Common myeloid progenitor, CD34-positive (primary cell): ENCODE measurements at regions of chr5 and their contacts with region 1.

Region 1: DNA sequence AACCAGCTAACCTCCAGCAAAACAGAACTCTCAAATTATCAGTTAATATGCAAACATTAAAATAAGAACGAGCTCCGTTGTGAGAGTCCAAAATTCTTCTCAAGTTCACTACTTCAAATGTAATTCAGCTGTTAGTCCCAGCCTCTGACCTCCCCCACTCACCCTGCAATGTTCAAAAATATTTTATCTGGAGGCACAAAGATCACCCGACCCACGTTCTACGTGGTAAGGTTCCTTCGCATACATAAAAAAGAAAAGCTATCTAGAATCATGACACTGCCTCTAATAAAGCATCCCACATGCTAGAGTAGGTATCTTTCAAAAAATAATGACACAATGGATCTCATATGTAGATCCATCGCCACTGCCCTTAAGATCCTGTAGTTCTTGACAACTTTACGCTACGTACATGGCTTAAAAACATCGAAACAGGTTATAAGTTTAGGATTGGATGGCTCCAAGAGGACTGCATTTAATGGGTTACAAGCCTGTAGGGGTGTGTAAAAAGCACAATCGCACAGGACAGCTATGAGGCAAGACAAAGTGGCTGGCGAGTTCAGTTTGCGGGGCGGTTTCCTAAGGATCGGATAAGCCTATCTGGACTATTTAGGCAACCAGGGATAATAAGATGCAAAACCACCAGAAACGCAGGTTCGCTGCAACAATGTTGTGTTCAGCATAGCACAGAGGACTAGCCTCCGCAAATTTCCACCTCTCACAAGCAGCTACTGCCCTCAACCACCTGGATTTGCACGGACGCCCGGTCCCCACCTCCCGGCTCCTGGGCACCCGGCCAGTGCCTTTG is 969 bp downstream of the CLK4 start:
- DNase-seq: peak in 1 of 3 donors; percentile 5
- H3K4me3 ChIP-seq: peak overlapping the region; percentile 81 to 99 (median 98)
- H3K27ac ChIP-seq: peak overlapping the region; percentile 93 to 96
- H3K4me1 ChIP-seq: peaks cover 12 to 19% (median 14%) of the 10 kb centered on the region in 4 experiments
- H3K27me3 ChIP-seq: no peaks in the 10 kb centered on the region

Region 2: DNA sequence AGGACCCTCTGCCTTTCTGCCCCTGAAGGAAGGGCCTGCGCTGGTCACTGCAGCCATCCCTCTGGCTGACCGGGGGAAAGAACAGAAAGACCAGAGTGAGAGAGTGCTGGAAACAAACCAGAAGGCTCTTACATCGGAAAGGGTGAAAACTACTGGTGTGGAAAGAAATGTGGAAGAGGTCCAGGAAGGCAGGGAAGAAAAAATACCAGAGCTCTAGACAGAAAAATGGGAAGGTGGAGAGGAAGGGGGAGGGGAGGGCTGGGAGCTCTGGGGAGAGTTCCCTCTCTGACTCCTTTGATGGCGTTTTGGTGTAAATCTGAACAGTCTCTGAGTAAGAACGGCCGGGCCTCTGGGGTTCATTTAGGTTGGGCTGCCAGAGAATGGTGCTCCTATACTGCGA is 83.4 kb before region 1 on chr5:
- CTCF ChIA-PET with region 1: no interaction called
- POLR2A ChIA-PET with region 1: no interaction called
- DNase-seq: no peak
- H3K4me3 ChIP-seq: no peak overlapping the region
- H3K27ac ChIP-seq: no peak overlapping the region
- H3K4me1 ChIP-seq: no peaks in the 10 kb centered on the region
- H3K27me3 ChIP-seq: peaks cover 0 to 5% (median 0%) of the 10 kb centered on the region in 5 experiments

Region 3: GRCh38 chr5:178602752-178603151 is 23.1 kb before region 1 on chr5:
- CTCF ChIA-PET with region 1: no interaction called
- POLR2A ChIA-PET with region 1: interaction called, 10 read pairs
- DNase-seq: no peak
- H3K4me3 ChIP-seq: no peak overlapping the region
- H3K27ac ChIP-seq: no peak overlapping the region
- H3K4me1 ChIP-seq: no peaks in the 10 kb centered on the region
- H3K27me3 ChIP-seq: no peaks in the 10 kb centered on the region

Region 4: GRCh38 chr5:178612299-178612698 is 13.6 kb before region 1 on chr5:
- CTCF ChIA-PET with region 1: interaction called, 11 read pairs
- POLR2A ChIA-PET with region 1: no interaction called
- DNase-seq: no peak
- H3K4me3 ChIP-seq: no peak overlapping the region
- H3K27ac ChIP-seq: no peak overlapping the region
- H3K4me1 ChIP-seq: no peaks in the 10 kb centered on the region
- H3K27me3 ChIP-seq: no peaks in the 10 kb centered on the region

Region 5: GRCh38 chr5:178649580-178649979 is 23.7 kb after region 1 on chr5:
- CTCF ChIA-PET with region 1: no interaction called
- POLR2A ChIA-PET with region 1: no interaction called
- DNase-seq: no peak
- H3K4me3 ChIP-seq: no peak overlapping the region
- H3K27ac ChIP-seq: no peak overlapping the region
- H3K4me1 ChIP-seq: peaks cover 0 to 3% (median 2%) of the 10 kb centered on the region in 4 experiments
- H3K27me3 ChIP-seq: no peaks in the 10 kb centered on the region